PC-3 (cell line): ENCODE measurements at regions of chr6 and their contacts with region 1.

Region 1: DNA sequence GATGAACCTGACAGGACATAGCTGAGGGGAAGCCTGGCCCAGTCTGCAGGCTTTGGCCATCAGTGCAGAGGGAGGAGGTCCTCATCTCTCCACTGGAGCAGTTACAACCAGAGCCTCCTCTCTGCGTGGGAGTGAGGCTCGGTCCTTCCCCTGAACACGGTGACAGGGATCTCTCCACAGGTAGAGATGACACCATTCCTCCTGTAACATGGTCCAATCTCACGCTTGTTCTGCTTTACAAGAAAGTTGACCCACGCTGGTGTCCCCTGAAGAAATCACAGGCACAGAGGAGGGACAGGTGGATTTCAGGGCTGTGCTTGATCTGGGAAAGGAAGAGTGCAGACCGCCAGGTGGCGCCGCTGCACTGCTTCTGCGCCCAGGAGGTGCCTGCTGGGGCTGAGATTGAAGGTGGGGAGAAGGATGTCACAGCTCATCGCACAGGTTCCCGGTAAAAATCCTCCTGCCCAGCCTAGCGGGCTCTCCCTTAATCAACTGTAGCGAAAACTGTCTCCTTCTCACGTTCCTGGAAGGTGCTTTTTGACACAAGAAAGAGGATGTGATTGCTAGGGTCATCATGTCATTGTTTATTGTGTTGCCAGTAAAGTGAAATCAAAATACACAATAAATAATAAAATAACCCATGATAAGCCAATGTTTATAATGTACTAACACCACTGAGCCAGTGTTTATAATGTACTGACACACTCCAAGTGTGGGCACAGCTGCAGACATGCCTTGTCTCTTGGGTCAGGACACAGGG is 20.4 kb downstream of the HLA-G start:
- DNase-seq: peak; percentile 80
- ATAC-seq: peak; percentile 90
- H3K4me3 ChIP-seq: no peak overlapping the region
- H3K27ac ChIP-seq: no peak overlapping the region
- H3K4me1 ChIP-seq: no peaks in the 10 kb centered on the region
- H3K27me3 ChIP-seq: no peaks in the 10 kb centered on the region
- CTCF ChIP-seq: peak; percentile 95

Region 2: DNA sequence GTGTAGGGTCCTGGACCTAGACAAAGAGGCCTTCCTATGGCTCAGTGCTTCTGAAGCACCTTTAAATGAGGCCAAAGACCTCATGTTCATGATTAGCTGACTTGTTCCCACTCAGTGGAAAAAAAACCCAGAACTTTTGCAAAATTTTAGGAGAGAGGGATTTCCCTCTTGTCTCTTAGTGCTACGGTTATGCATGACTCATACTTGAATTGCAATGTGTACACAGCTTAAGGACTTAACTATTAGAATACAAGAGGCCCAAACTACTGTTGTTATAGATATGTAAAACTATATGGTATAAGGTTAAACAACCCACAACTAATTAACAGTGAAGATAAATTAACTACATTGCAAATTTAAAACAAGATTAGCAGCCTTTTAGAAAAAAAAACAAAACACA is 61.9 kb after region 1 on chr6:
- CTCF ChIA-PET with region 1: no interaction called
- POLR2A ChIA-PET with region 1: no interaction called
- intact Hi-C with region 1: no loop called
- DNase-seq: no peak
- ATAC-seq: peak; percentile 37; the same call in 1 of the 2 replicates
- H3K4me3 ChIP-seq: no peak overlapping the region
- H3K27ac ChIP-seq: no peak overlapping the region
- H3K4me1 ChIP-seq: no peaks in the 10 kb centered on the region
- H3K27me3 ChIP-seq: no peaks in the 10 kb centered on the region
- CTCF ChIP-seq: no peak

Region 3: GRCh38 chr6:30013291-30013922 is 165.4 kb after region 1 on chr6:
- CTCF ChIA-PET with region 1: no interaction called
- POLR2A ChIA-PET with region 1: no interaction called
- intact Hi-C with region 1: loop called (anchors 2 kb)
- DNase-seq: peak; percentile 34
- ATAC-seq: no peak; the same call in 1 of the 2 replicates
- H3K4me3 ChIP-seq: no peak overlapping the region
- H3K27ac ChIP-seq: no peak overlapping the region
- H3K4me1 ChIP-seq: no peaks in the 10 kb centered on the region
- H3K27me3 ChIP-seq: no peaks in the 10 kb centered on the region
- CTCF ChIP-seq: peak; percentile 90